CD14-positive monocyte (primary cell): ENCODE measurements at regions of chr3 and their contacts with region 1.

Region 1: GRCh38 chr3:23945903-23946751 is 1.0 kb downstream of the NR1D2 start:
- DNase-seq: peak; percentile 94 to 98 (median 97)
- H3K4me3 ChIP-seq: peak overlapping the region; percentile 46 to 83 (median 62)
- H3K4me3 Mint-ChIP-seq: peak overlapping the region; percentile 80 to 91
- H3K27ac ChIP-seq: peak overlapping the region; percentile 67 to 89
- H3K27ac Mint-ChIP-seq: peak overlapping the region; percentile 88 to 96 (median 93)
- H3K4me1 ChIP-seq: peaks cover 27 to 29% of the 10 kb centered on the region in 2 donors
- H3K4me1 Mint-ChIP-seq: peaks cover 35% of the 10 kb centered on the region
- H3K27me3 ChIP-seq: peaks cover 6 to 13% of the 10 kb centered on the region in 2 donors
- H3K27me3 Mint-ChIP-seq: peaks cover 16 to 24% (median 21%) of the 10 kb centered on the region in 3 donors
- CTCF ChIP-seq: no peak

Region 2: GRCh38 chr3:23202921-23203707 is 743.0 kb before region 1 on chr3 and contains the start of gene UBE2E2:
- intact Hi-C with region 1: loop called in 1 of 2 experiments (anchors 10 kb)
- DNase-seq: peak; percentile 65 to 80 (median 68)
- H3K4me3 ChIP-seq: peak within 1 kb of the TSS; percentile 84 to 97 (median 84)
- H3K4me3 Mint-ChIP-seq: peak within 1 kb of the TSS; percentile 95 to 97
- H3K27ac ChIP-seq: peak within 1 kb of the TSS; percentile 72 to 93
- H3K27ac Mint-ChIP-seq: peak within 1 kb of the TSS; percentile 86 to 96 (median 90)
- H3K4me1 ChIP-seq: peaks cover 10 to 14% of the 10 kb centered on the region in 2 donors
- H3K4me1 Mint-ChIP-seq: peaks cover 27% of the 10 kb centered on the region
- H3K27me3 ChIP-seq: no peaks in the 10 kb centered on the region
- H3K27me3 Mint-ChIP-seq: peaks cover 5 to 11% (median 7%) of the 10 kb centered on the region in 3 donors
- CTCF ChIP-seq: no peak
- polyA plus RNA-seq, gene UBE2E2: 25.8 to 78.0 (median 66.3) TPM

Region 3: DNA sequence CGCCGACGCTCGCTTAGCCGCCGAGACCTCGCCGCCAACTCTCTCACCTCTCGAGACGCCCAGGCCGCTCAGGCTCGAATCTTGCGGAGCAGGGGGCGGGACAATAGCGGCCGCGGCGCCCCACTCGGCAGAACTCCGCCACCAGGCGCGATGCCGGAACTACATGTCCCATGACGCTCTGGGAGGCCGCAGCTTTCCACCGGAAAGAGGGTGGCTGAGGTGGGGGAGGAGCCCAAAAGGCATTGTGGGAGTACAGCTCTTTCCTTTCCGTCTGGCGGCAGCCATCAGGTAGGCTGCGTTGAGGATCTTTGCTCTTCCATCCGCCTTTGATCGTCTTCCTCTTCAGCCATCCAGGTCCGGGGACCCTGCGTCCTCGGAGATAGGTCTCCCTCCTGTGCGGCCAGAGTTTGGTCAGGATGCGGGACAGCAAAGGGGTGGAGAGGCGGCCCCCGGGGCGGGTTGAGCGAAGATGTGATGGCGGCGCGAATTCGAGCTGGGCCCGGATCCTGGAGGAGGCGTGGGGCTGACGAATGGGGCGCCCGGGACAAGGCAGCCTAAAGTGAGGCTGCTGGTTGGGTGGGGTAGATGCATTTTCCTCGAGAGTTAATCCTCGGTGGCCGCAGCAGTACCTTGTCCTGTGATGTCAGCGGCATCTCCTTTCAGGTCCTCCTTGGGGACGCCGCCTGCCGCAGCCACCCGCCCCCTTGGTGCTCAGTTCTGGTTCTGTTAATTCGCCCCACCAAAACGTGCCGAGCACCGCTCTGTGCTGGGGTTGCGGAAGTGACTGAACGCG is 29.0 kb before region 1 on chr3 and contains the starts of genes NKIRAS1 and RPL15:
- intact Hi-C with region 1: loop called in 1 of 2 experiments (anchors 2 kb)
- DNase-seq: peak; percentile 94 to 96 (median 95)
- H3K4me3 ChIP-seq: peak within 1 kb of the TSS; percentile 91 to 100 (median 100)
- H3K4me3 Mint-ChIP-seq: peak within 1 kb of the TSS; percentile 96 to 97
- H3K27ac ChIP-seq: peak within 1 kb of the TSS; percentile 94
- H3K27ac Mint-ChIP-seq: peak within 1 kb of the TSS; percentile 93 to 97 (median 95)
- H3K4me1 ChIP-seq: peaks cover 26 to 33% of the 10 kb centered on the region in 2 donors
- H3K4me1 Mint-ChIP-seq: peaks cover 43% of the 10 kb centered on the region
- H3K27me3 ChIP-seq: no peaks in the 10 kb centered on the region
- H3K27me3 Mint-ChIP-seq: peaks cover 8 to 11% (median 10%) of the 10 kb centered on the region in 3 donors
- CTCF ChIP-seq: peak; percentile 63
- polyA plus RNA-seq, gene NKIRAS1: 0.69 to 2.0 (median 1.9) TPM
- polyA plus RNA-seq, gene RPL15: 2,510 to 3,161 (median 2,781) TPM

Region 4: GRCh38 chr3:24042174-24043059 is 96.3 kb after region 1 on chr3:
- intact Hi-C with region 1: no loop called
- DNase-seq: no peak
- H3K4me3 ChIP-seq: no peak overlapping the region
- H3K4me3 Mint-ChIP-seq: no peak overlapping the region
- H3K27ac ChIP-seq: no peak overlapping the region
- H3K27ac Mint-ChIP-seq: no peak overlapping the region
- H3K4me1 ChIP-seq: no peaks in the 10 kb centered on the region
- H3K4me1 Mint-ChIP-seq: no peaks in the 10 kb centered on the region
- H3K27me3 ChIP-seq: no peaks in the 10 kb centered on the region
- H3K27me3 Mint-ChIP-seq: peaks cover 0 to 2% (median 0%) of the 10 kb centered on the region in 3 donors
- CTCF ChIP-seq: no peak

Region 5: GRCh38 chr3:25664810-25665314 is 1718.7 kb after region 1 on chr3 and contains the start of gene TOP2B:
- intact Hi-C with region 1: loop called in 1 of 2 experiments (anchors 10 kb)
- DNase-seq: peak; percentile 89 to 95 (median 95)
- H3K4me3 ChIP-seq: peak within 1 kb of the TSS; percentile 78 to 94 (median 88)
- H3K4me3 Mint-ChIP-seq: peak within 1 kb of the TSS; percentile 90 to 100
- H3K27ac ChIP-seq: peak within 1 kb of the TSS; percentile 89 to 90
- H3K27ac Mint-ChIP-seq: peak within 1 kb of the TSS; percentile 96 to 99 (median 99)
- H3K4me1 ChIP-seq: peaks cover 23 to 47% of the 10 kb centered on the region in 2 donors
- H3K4me1 Mint-ChIP-seq: peaks cover 44% of the 10 kb centered on the region
- H3K27me3 ChIP-seq: no peaks in the 10 kb centered on the region
- H3K27me3 Mint-ChIP-seq: no peaks in the 10 kb centered on the region
- CTCF ChIP-seq: no peak
- polyA plus RNA-seq, gene TOP2B: 21.4 to 27.0 (median 26.1) TPM